ENCODE measurements at regions of chr18 and their contacts with region 1.

Region 1: DNA sequence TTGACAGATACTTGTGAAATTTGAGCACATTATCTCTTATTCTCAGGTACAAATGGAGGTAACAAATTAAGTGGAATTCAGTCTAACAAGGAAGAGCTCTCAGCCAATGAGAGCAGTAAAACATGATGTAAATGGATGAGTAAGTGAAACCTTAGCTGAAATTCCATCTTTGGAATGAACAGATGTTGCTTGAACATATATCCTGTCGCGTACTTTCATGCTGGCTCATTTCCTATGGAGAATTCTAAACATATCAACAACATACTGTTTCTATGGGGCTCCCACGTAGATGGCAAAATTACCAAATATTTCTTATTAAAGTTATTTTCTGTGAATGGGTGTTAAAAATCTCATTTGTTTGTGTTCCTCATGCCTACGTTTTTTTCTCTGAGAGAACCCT is 256.3 kb upstream of the LINC00305 start:
- DNase-seq: no peak

Region 2: GRCh38 chr18:63216516-63217311 is 1188.4 kb before region 1 on chr18:
- intact Hi-C with region 1: no loop called
- DNase-seq: no peak

Region 3: GRCh38 chr18:64384101-64384500 is 21.1 kb before region 1 on chr18:
- intact Hi-C with region 1: loop called in 1 of 2 experiments (anchors 1 kb)
- DNase-seq: no peak

Measured in posterior vena cava (tissue), 2 donors.